ENCODE measurements at regions of chr6 and their contacts with region 1.

Region 1: GRCh38 chr6:154928325-154928922 is 66.7 kb upstream of the TIAM2 start:
- DNase-seq: peak; percentile 52
- H3K4me3 Mint-ChIP-seq: no peak overlapping the region
- H3K27ac Mint-ChIP-seq: peak overlapping the region; percentile 12
- H3K4me1 Mint-ChIP-seq: peaks cover 21% of the 10 kb centered on the region
- H3K27me3 Mint-ChIP-seq: no peaks in the 10 kb centered on the region

Region 2: DNA sequence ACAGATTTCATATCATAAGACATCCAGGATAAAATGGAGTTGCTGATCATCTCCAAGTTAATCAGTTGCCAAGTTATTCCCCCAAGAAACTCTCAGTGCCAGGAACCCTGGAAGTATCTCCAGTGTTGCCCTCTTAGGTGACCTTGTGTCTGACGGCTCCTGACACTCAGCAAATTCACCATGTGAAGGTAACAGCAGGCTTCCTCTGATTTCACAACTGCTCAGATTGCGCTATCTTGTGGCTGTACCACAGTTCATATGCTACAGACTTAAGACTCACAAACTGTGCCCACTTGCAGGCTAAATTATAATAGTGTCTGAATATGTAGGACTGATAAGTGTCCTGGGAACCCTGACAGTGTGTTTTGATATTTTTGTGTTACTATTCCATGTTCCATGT is 1075.9 kb before region 1 on chr6:
- intact Hi-C with region 1: no loop called
- DNase-seq: no peak
- H3K4me3 Mint-ChIP-seq: no peak overlapping the region
- H3K27ac Mint-ChIP-seq: no peak overlapping the region
- H3K4me1 Mint-ChIP-seq: no peaks in the 10 kb centered on the region
- H3K27me3 Mint-ChIP-seq: no peaks in the 10 kb centered on the region

Region 3: GRCh38 chr6:154868143-154868594 is 60.3 kb before region 1 on chr6:
- intact Hi-C with region 1: loop called (anchors 2 kb)
- DNase-seq: no peak
- H3K4me3 Mint-ChIP-seq: no peak overlapping the region
- H3K27ac Mint-ChIP-seq: no peak overlapping the region
- H3K4me1 Mint-ChIP-seq: peaks cover 6% of the 10 kb centered on the region
- H3K27me3 Mint-ChIP-seq: no peaks in the 10 kb centered on the region

Region 4: DNA sequence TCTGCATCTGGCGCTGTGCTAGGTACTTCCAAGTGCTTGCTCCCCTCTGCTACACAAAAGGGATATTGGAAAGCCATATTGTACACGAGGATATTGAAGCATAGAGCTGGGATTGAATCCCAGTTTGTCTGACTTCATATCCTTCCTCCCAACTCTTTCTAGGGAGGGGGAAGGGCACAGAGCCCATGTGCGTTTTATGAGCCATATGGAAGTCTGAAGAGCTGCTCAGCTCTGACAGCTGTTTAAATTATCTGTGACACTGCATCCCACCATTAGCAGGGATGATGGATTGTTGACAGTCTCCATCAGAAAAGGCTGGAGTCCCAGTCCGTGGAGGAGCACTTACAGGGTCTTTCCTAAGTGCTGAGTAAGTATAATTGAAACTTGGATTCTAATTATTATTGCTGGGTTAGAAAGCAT is 85.0 kb after region 1 on chr6:
- intact Hi-C with region 1: no loop called
- DNase-seq: no peak
- H3K4me3 Mint-ChIP-seq: no peak overlapping the region
- H3K27ac Mint-ChIP-seq: no peak overlapping the region
- H3K4me1 Mint-ChIP-seq: peaks cover 7% of the 10 kb centered on the region
- H3K27me3 Mint-ChIP-seq: peaks cover 3% of the 10 kb centered on the region

Region 5: GRCh38 chr6:155100087-155100486 is 171.7 kb after region 1 on chr6:
- intact Hi-C with region 1: loop called (anchors 2 kb)
- DNase-seq: no peak
- H3K4me3 Mint-ChIP-seq: no peak overlapping the region
- H3K27ac Mint-ChIP-seq: no peak overlapping the region
- H3K4me1 Mint-ChIP-seq: peaks cover 32% of the 10 kb centered on the region
- H3K27me3 Mint-ChIP-seq: no peaks in the 10 kb centered on the region

Region 6: GRCh38 chr6:155223646-155224451 is 295.4 kb after region 1 on chr6:
- intact Hi-C with region 1: loop called (anchors 1 kb)
- DNase-seq: peak; percentile 65
- H3K4me3 Mint-ChIP-seq: peak overlapping the region; percentile 70
- H3K27ac Mint-ChIP-seq: peak overlapping the region; percentile 91
- H3K4me1 Mint-ChIP-seq: peaks cover 34% of the 10 kb centered on the region
- H3K27me3 Mint-ChIP-seq: peaks cover 2% of the 10 kb centered on the region

Region 7: DNA sequence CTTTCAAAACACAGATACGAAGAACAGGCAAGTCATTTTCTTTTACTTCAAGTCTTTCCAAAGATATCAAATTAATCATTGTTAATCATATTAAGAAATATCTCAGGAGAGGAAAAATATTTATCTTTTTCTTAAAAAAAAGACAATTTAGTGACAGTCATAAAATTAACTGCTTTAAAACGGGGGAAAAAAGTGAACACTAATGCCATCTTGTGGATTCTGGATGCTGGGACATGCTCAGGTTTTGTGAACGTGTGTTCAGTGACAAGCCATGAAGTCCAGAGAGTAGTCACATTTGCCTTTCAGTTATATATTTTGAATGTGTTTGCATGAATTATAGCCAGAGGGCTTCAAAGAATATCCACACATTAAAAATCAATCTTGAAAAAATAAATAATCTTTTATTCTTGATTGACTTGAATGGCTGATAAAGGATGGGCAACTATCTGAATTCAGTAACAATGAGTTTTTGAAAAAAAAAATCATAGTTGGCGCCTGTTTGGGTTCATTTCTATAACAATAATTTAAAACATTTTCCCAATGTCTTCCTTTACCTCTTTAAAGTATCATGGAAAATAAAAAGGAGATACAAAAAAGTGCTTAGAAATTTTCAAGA is 601.9 kb after region 1 on chr6:
- intact Hi-C with region 1: loop called (anchors 1 kb)
- DNase-seq: no peak
- H3K4me3 Mint-ChIP-seq: no peak overlapping the region
- H3K27ac Mint-ChIP-seq: no peak overlapping the region
- H3K4me1 Mint-ChIP-seq: peaks cover 10% of the 10 kb centered on the region
- H3K27me3 Mint-ChIP-seq: peaks cover 4% of the 10 kb centered on the region

Region 8: DNA sequence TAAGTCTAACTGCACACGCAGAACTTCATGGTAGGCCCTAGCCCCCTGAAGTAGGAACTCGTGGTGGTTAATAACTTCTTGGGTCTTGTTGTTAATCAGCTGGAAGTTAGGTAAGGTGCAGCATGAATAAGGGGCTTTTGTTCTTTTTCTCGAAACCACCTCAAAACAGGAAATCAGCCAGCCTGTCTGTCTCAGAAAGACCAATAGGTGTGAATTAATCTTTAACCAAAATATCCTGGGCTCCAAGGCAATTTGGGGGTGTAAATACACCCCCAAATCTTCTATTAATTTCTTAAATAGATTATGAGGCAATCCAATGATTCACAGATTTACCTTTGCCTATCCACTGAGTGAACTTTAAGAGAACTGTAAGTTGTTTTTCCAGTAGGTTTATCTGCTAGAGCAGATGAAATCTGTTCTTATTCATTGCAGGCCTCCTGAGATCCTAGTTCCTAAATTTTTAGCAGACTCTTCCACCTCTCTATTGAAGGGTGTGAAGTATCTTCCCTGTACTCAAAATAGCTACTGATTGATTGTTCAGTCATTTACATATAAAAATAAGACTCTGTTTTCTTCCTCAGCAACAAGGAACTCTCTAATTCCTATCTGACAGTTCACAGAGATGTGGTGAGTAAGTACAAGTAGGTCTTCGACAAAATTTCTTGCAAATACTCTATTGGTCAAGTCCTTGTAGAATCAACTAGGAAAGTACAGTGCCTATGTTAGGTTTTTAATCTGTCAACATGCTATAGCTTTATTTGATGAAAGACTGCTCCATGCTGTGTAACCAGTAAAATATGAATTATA is 954.3 kb after region 1 on chr6:
- intact Hi-C with region 1: no loop called
- DNase-seq: no peak
- H3K4me3 Mint-ChIP-seq: no peak overlapping the region
- H3K27ac Mint-ChIP-seq: no peak overlapping the region
- H3K4me1 Mint-ChIP-seq: no peaks in the 10 kb centered on the region
- H3K27me3 Mint-ChIP-seq: no peaks in the 10 kb centered on the region